Heart right ventricle (tissue), 16 donors: ENCODE measurements at regions of chr4 and their contacts with region 1.

Region 1: GRCh38 chr4:184664448-184665210 is 15.1 kb downstream of the PRIMPOL start:
- DNase-seq: peak in 1 of 2 donors; percentile 11
- ATAC-seq: peak in 6 of 8 donors; percentile 50 to 85 (median 71)
- H3K4me3 ChIP-seq: no peak overlapping the region
- H3K27ac ChIP-seq: no peak overlapping the region
- H3K4me1 ChIP-seq: peaks cover 0 to 42% (median 8%) of the 10 kb centered on the region in 9 donors
- H3K27me3 ChIP-seq: no peaks in the 10 kb centered on the region
- CTCF ChIP-seq: no peak

Region 2: DNA sequence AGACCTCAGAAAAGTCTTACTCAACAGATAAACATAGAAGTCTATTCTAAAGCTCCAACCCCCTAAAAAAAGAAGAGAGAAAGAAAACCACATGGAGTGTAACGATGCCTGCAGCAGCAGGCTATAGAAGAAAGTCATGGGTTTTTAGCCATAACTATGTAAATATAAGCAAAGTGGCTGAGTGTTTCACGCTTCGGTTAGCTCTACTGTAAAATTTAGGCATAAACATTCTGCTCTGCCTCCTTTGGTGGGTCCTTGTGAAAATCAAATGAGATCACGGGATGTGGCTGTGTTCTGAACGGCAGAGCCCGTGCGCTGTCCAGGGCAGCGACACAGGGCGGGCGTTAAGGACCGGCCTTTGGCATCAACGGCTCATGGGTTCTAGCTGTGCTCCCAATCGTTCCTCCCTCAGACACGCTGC is 268.6 kb before region 1 on chr4:
- intact Hi-C with region 1: no loop called
- DNase-seq: no peak
- ATAC-seq: peak in 1 of 8 donors; percentile 11
- H3K4me3 ChIP-seq: no peak overlapping the region
- H3K27ac ChIP-seq: peak overlapping the region; percentile 2 to 88 (median 64)
- H3K4me1 ChIP-seq: peaks cover under 1 to 98% (median 40%) of the 10 kb centered on the region in 9 donors
- H3K27me3 ChIP-seq: no peaks in the 10 kb centered on the region
- CTCF ChIP-seq: no peak

Region 3: GRCh38 chr4:184713887-184714286 is 49.3 kb after region 1 on chr4:
- intact Hi-C with region 1: loop called in 1 of 10 experiments (anchors 10 kb)
- DNase-seq: no peak
- ATAC-seq: no peak
- H3K4me3 ChIP-seq: no peak overlapping the region
- H3K27ac ChIP-seq: no peak overlapping the region
- H3K4me1 ChIP-seq: no peaks in the 10 kb centered on the region
- H3K27me3 ChIP-seq: no peaks in the 10 kb centered on the region
- CTCF ChIP-seq: no peak